ENCODE measurements at regions of chr4 and their contacts with region 1.

Region 1: GRCh38 chr4:118586357-118586790 is 98.8 kb upstream of the METTL14 start:
- DNase-seq: no peak
- H3K4me3 Mint-ChIP-seq: no peak overlapping the region
- H3K27ac Mint-ChIP-seq: no peak overlapping the region
- H3K4me1 Mint-ChIP-seq: peaks cover 9% of the 10 kb centered on the region
- H3K27me3 Mint-ChIP-seq: peaks cover 9% of the 10 kb centered on the region

Region 2: GRCh38 chr4:117134386-117134785 is 1452.0 kb before region 1 on chr4:
- intact Hi-C with region 1: no loop called
- DNase-seq: no peak
- H3K4me3 Mint-ChIP-seq: no peak overlapping the region
- H3K27ac Mint-ChIP-seq: no peak overlapping the region
- H3K4me1 Mint-ChIP-seq: no peaks in the 10 kb centered on the region
- H3K27me3 Mint-ChIP-seq: no peaks in the 10 kb centered on the region

Region 3: GRCh38 chr4:118005883-118006282 is 580.5 kb before region 1 on chr4:
- intact Hi-C with region 1: no loop called
- DNase-seq: no peak
- H3K4me3 Mint-ChIP-seq: no peak overlapping the region
- H3K27ac Mint-ChIP-seq: no peak overlapping the region
- H3K4me1 Mint-ChIP-seq: no peaks in the 10 kb centered on the region
- H3K27me3 Mint-ChIP-seq: no peaks in the 10 kb centered on the region

Region 4: DNA sequence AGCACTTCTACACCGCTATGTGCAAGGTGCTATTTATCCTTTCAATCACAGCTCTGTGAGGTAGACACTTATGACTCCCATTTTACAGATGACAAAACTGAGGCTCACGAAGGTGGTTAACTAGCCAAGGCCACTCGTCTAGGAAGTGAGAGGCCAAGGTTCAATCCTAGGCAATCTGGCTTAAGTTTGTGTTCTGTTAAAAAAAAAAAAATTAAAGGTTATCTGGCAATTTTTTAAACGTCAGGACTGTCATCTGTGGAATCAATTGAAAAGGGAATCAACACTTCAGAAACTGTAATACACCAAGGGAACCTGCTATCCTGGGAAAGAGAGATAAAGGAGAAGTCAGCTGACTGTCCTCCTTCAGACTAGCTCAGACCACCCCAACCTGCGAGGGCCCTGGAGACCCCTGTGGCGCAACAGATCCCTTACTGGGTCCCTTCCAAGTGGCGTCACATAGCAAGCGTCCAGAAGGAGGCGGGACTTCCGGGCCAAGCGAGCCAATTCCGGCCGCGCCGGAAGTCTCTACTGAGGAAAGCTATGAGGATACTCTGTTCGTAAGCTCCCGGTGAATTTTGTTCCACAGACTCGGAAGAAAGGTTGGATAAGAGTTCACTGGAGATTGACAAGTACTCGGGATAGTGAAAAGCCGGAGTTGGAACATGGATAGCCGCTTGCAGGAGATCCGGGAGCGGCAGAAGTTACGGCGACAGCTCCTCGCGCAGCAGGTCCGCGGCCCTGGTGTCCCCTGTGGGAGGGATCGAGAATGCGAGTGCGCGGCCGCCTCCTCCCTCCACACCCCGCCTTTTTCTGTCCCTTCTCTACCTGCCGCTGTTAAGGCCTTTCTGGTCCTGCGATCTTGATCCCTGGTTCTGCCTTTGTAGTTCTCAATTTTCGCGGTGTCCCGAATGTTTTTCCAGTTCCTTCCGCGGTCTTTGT is 98.8 kb after region 1 on chr4 and contains the start of gene METTL14:
- intact Hi-C with region 1: loop called (anchors 1 kb)
- DNase-seq: peak; percentile 96
- H3K4me3 Mint-ChIP-seq: peak within 1 kb of the TSS; percentile 98
- H3K27ac Mint-ChIP-seq: peak within 1 kb of the TSS; percentile 95
- H3K4me1 Mint-ChIP-seq: peaks cover 11% of the 10 kb centered on the region
- H3K27me3 Mint-ChIP-seq: peaks cover 2% of the 10 kb centered on the region
- total RNA-seq, gene METTL14: 50.2 and 51.9 TPM in 2 replicates

Measured in activated CD4-positive, alpha-beta T cell treated with anti-CD3 and anti-CD28 coated beads, Interleukin-2, amount 10 ng/mL, durations not matched to agents 24 days and 14 days (primary cell).